ENCODE measurements at regions of chr2 and their contacts with region 1.

Region 1: GRCh38 chr2:157443795-157444640 is at the start of gene CYTIP:
- DNase-seq: peak; percentile 71 to 78 (median 76)
- H3K4me3 ChIP-seq: peak within 1 kb of the TSS; percentile 81 to 85
- H3K4me3 Mint-ChIP-seq: peak within 1 kb of the TSS; percentile 90 to 100 (median 98)
- H3K27ac ChIP-seq: peak within 1 kb of the TSS; percentile 85
- H3K27ac Mint-ChIP-seq: peak within 1 kb of the TSS; percentile 94 to 100 (median 95)
- H3K4me1 ChIP-seq: peaks cover 47% of the 10 kb centered on the region
- H3K4me1 Mint-ChIP-seq: peaks cover 33 to 78% (median 38%) of the 10 kb centered on the region in 4 donors
- H3K27me3 ChIP-seq: no peaks in the 10 kb centered on the region
- H3K27me3 Mint-ChIP-seq: no peaks in the 10 kb centered on the region
- total RNA-seq, gene CYTIP: 231 to 248 TPM

Region 2: DNA sequence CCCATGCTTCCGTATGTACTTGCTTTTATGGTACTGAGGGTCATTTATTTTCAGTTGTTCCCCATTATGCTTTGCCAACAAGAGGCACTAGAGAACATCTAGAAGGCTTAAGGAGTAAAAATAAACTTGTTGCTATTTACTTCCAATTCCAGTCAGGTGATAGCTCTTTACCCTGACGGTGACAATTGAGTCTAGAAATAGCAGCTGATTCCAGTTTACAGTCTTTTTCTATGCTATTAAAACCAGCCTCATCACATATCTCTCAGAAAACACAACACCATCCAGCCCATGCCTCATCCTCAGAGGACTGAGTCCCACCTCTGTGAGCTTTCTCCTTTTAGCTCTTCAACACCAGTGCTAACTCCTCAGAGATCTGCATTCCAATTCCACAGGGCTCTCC is 680.8 kb before region 1 on chr2:
- CTCF ChIA-PET with region 1: no interaction called
- POLR2A ChIA-PET with region 1: no interaction called
- intact Hi-C with region 1: no loop called
- DNase-seq: no peak
- H3K4me3 ChIP-seq: no peak overlapping the region
- H3K4me3 Mint-ChIP-seq: no peak overlapping the region
- H3K27ac ChIP-seq: no peak overlapping the region
- H3K27ac Mint-ChIP-seq: no peak overlapping the region
- H3K4me1 ChIP-seq: no peaks in the 10 kb centered on the region
- H3K4me1 Mint-ChIP-seq: no peaks in the 10 kb centered on the region
- H3K27me3 ChIP-seq: no peaks in the 10 kb centered on the region
- H3K27me3 Mint-ChIP-seq: no peaks in the 10 kb centered on the region

Region 3: DNA sequence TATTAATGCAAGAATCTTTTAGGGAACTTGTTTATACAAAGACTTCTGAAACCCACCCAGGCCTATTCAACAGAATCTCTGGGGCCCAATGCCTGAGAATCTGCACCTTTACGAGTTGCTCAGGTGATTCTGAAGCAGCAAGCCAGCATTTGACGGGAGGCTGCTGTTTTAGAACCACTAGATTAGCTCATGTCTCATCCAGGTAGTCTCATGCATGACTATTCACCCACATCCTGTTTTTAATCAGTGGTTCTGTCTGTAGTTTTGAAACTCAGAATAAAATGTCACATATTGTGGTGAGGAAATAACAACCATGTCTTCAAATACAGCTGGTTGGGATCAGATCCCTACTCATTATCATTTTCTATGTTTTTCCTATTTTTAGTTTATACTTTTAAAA is 39.7 kb before region 1 on chr2:
- CTCF ChIA-PET with region 1: interaction called, 14 read pairs
- POLR2A ChIA-PET with region 1: interaction called, 1,017 read pairs
- intact Hi-C with region 1: loop called (anchors 1 kb)
- DNase-seq: peak; percentile 79 to 87 (median 85)
- H3K4me3 ChIP-seq: no peak overlapping the region
- H3K4me3 Mint-ChIP-seq: peak overlapping the region; percentile 49 to 85 (median 68)
- H3K27ac ChIP-seq: peak overlapping the region; percentile 51
- H3K27ac Mint-ChIP-seq: peak overlapping the region; percentile 95 to 100 (median 99)
- H3K4me1 ChIP-seq: peaks cover 60% of the 10 kb centered on the region
- H3K4me1 Mint-ChIP-seq: peaks cover 52 to 76% (median 63%) of the 10 kb centered on the region in 4 donors
- H3K27me3 ChIP-seq: no peaks in the 10 kb centered on the region
- H3K27me3 Mint-ChIP-seq: no peaks in the 10 kb centered on the region

Region 4: DNA sequence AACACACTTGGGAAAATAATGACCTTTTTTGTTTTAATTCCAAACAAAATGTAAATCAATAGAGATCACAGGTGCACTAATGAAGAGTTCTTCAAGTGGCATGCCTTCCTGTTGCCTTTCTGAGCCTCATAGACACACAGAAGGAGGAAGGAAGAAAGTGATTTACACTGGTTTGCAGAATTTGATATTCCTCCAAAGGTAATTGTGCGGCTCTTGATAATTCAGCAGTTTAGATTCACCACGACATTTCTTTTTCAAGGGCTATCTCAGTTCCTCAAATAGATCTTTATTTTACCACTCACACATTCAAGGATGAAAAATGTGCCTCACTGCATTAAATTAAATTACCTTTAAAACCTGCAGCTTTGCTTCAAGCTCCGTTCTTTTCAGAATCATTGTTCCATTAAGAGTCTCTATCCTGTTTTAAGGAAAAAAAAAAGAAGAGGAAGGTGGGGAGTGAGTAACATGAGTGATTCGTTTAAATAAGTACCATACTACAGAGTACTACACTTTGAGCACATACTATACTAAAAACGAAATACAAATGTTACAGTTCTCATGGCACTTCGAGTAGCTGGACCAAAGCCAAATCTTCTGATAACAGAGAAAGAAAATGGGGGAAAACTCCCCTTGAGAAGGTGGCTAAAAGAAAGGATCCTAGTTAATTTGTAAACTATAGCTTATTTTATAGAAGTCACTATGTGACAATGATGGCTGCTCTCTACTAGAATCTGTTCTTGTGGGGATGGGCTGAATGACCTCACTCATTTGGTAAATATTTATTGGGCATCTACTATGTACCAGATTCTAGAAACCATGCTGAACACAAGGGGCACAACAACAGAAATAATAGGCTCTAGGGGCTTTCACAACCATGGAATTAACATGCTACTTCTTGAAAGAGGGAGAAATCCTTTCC is 16.8 kb before region 1 on chr2:
- CTCF ChIA-PET with region 1: interaction called, 20 read pairs
- POLR2A ChIA-PET with region 1: interaction called, 809 read pairs
- intact Hi-C with region 1: no loop called
- DNase-seq: no peak
- H3K4me3 ChIP-seq: no peak overlapping the region
- H3K4me3 Mint-ChIP-seq: peak overlapping the region in 4 of 8 donors; percentile 14 to 52 (median 41)
- H3K27ac ChIP-seq: no peak overlapping the region
- H3K27ac Mint-ChIP-seq: peak overlapping the region; percentile 38 to 95 (median 73)
- H3K4me1 ChIP-seq: peaks cover 87% of the 10 kb centered on the region
- H3K4me1 Mint-ChIP-seq: peaks cover 46 to 82% (median 69%) of the 10 kb centered on the region in 4 donors
- H3K27me3 ChIP-seq: no peaks in the 10 kb centered on the region
- H3K27me3 Mint-ChIP-seq: no peaks in the 10 kb centered on the region

Region 5: DNA sequence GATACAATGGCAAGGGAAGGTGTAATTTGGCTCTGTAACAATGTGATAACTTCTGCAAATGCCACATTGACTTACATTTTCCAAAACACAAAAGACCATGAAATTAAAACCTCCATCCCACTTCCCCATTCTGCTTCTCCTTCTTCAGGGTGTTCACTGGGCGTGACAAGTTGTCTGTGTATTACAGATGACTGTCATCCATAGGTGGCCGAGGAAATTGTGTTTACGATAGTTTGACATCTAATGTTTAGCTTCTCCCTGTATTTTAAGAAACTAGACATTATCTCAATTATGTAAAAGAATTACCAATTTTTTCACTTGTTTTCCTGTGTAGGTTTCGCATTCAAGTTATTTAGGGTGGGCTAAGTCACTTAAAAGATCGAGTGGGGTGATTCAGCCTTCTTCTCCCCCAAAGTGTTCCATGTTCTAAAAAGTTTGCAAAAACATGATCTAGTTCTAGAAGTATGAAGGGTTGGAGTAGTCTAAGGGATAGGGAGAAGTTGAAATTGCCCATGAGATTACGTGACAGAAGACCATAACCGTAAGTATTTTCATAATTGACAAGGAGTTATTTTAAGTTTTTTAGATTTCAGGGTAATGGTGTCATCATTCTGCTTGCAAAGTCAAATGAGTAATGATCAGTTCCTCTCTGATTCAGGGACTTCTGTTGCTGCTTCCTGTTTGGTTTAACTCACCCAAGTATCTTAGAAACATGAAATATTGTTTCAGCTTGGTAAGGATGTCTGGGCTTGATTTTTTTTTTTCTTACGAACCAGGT is 25.1 kb after region 1 on chr2:
- CTCF ChIA-PET with region 1: interaction called, 6 read pairs
- POLR2A ChIA-PET with region 1: interaction called, 131 read pairs
- intact Hi-C with region 1: loop called (anchors 1 kb)
- DNase-seq: peak; percentile 45 to 80 (median 70)
- H3K4me3 ChIP-seq: peak overlapping the region in 1 of 2 donors; percentile 50
- H3K4me3 Mint-ChIP-seq: peak overlapping the region; percentile 49 to 83 (median 69)
- H3K27ac ChIP-seq: peak overlapping the region; percentile 71
- H3K27ac Mint-ChIP-seq: peak overlapping the region; percentile 93 to 99 (median 98)
- H3K4me1 ChIP-seq: peaks cover 49% of the 10 kb centered on the region
- H3K4me1 Mint-ChIP-seq: peaks cover 49 to 78% (median 60%) of the 10 kb centered on the region in 4 donors
- H3K27me3 ChIP-seq: no peaks in the 10 kb centered on the region
- H3K27me3 Mint-ChIP-seq: no peaks in the 10 kb centered on the region

Region 6: GRCh38 chr2:157876066-157876787 is 432.2 kb after region 1 on chr2 and contains the start of gene ACVR1:
- CTCF ChIA-PET with region 1: no interaction called
- POLR2A ChIA-PET with region 1: interaction called, 11 read pairs
- intact Hi-C with region 1: no loop called
- DNase-seq: peak; percentile 78 to 90 (median 80)
- H3K4me3 ChIP-seq: peak within 1 kb of the TSS; percentile 74 to 76
- H3K4me3 Mint-ChIP-seq: peak within 1 kb of the TSS; percentile 94 to 100 (median 96)
- H3K27ac ChIP-seq: peak within 1 kb of the TSS; percentile 66
- H3K27ac Mint-ChIP-seq: peak within 1 kb of the TSS; percentile 88 to 96 (median 93)
- H3K4me1 ChIP-seq: peaks cover 71% of the 10 kb centered on the region
- H3K4me1 Mint-ChIP-seq: peaks cover 46 to 69% (median 60%) of the 10 kb centered on the region in 4 donors
- H3K27me3 ChIP-seq: no peaks in the 10 kb centered on the region
- H3K27me3 Mint-ChIP-seq: no peaks in the 10 kb centered on the region
- total RNA-seq, gene ACVR1: 26.9 to 31.9 TPM